GM13976 (cell line): ENCODE measurements at regions of chr15 and their contacts with region 1.

Region 1: GRCh38 chr15:64050281-64051092 is 4.2 kb upstream of the DAPK2 start:
- DNase-seq: no peak
- CTCF ChIP-seq: no peak

Region 2: GRCh38 chr15:63610200-63610841 is 440.2 kb before region 1 on chr15:
- in situ Hi-C with region 1: loop called (anchors 10 kb)
- DNase-seq: peak; percentile 84
- CTCF ChIP-seq: peak; percentile 81

Region 3: DNA sequence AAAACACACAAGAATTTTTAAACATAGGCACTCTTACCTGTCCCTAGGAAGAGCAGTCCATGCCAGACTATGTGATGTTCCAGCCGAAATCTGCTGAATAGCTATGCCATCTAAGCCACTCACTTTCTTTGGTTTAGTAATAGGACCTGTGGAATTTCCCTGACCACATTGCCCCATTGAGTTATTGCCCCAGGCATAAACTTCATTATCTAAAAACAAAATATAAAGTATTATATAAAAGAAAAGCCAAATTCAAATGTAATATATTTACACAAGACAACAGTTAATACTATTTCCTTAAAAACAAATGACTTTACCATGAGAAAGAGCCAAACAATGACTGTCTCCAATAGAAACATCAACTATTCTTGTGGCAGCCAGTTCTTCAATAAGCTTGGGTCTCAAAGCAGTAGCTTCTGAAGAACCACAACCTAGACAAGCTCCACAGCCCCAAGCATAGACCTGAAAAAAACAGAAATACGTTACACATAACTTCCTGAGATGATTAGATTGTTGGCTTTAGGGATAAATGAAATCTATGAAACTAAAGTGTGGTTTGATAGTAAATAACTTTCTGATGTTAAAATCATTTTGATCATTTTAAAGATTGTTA is 301.1 kb before region 1 on chr15:
- in situ Hi-C with region 1: loop called (anchors 10 kb)
- DNase-seq: no peak
- CTCF ChIP-seq: no peak